Activated CD8-positive, alpha-beta T cell treated with anti-CD3 and anti-CD28 coated beads for 36 hours (primary cell): ENCODE measurements at regions of chr7 and their contacts with region 1.

Region 1: DNA sequence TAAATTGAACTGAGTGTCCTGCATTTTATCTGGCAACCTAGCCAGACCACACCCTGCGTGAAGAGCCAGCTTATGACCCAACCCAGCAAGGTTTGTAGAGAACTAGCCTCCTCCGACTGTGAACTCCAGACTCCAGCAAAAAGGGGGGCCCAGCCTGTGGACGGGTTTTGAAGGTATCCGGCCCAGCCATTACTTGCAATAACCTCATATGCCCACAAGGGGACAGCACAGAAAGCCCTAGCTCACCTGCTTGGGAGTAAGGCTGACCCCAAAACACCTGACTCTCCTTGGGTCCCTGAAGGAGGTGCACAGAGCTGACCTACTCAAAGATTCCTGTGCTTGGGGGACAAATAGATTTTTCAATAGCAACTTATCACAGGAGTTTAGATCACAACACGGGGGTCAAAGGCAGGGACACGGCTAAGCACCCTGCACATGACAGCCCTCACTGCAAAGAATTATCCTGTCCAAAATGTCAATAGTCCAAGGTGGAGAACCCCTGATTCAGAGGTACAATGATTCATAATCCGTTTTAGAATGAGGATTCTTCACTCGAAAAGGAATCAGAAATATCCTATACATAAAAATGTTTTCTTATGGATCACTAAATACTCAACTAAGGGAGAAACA is 4.6 kb downstream of the TRPV6 start:
- DNase-seq: peak; percentile 67
- ATAC-seq: peak; percentile 94
- H3K4me3 Mint-ChIP-seq: no peak overlapping the region
- H3K27ac Mint-ChIP-seq: no peak overlapping the region
- H3K4me1 Mint-ChIP-seq: no peaks in the 10 kb centered on the region
- H3K27me3 Mint-ChIP-seq: no peaks in the 10 kb centered on the region
- CTCF ChIP-seq: peak; percentile 90

Region 2: GRCh38 chr7:142916508-142916907 is 35.5 kb after region 1 on chr7:
- CTCF ChIA-PET with region 1: no interaction called
- POLR2A ChIA-PET with region 1: no interaction called
- intact Hi-C with region 1: no loop called
- DNase-seq: no peak
- ATAC-seq: no peak
- H3K4me3 Mint-ChIP-seq: no peak overlapping the region
- H3K27ac Mint-ChIP-seq: no peak overlapping the region
- H3K4me1 Mint-ChIP-seq: no peaks in the 10 kb centered on the region
- H3K27me3 Mint-ChIP-seq: peaks cover 3% of the 10 kb centered on the region
- CTCF ChIP-seq: no peak

Region 3: DNA sequence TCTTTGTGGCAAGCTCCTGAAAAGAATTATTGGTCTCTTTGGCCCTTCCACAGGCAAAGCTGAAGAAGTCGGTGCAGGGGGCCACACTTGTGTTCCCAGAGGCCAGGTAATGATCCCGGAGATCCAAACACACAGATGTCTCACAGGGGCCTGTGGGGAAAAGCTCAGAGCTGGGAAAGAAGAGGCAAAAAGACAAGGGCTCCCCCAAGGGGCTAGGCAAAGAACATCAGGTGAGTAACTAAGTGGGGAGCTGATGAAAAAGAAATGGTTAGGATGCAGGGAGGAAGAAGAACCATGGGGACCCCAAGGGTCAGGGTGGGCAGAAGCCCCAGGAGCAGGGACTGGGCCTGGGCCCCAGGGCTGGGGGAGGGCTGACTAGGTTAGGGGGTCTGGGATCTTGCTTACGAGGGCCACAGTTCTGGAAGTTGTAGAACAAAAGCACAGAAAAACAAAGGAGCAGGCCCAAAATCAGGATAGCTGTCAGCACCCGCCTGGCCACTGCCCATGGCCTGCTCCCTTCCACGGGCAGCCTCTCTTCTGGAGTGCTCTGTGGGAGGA is 80.0 kb after region 1 on chr7:
- CTCF ChIA-PET with region 1: interaction called, 13 read pairs
- POLR2A ChIA-PET with region 1: no interaction called
- intact Hi-C with region 1: no loop called
- DNase-seq: peak; percentile 11
- ATAC-seq: no peak
- H3K4me3 Mint-ChIP-seq: no peak overlapping the region
- H3K27ac Mint-ChIP-seq: no peak overlapping the region
- H3K4me1 Mint-ChIP-seq: no peaks in the 10 kb centered on the region
- H3K27me3 Mint-ChIP-seq: peaks cover 7% of the 10 kb centered on the region
- CTCF ChIP-seq: no peak